ENCODE measurements at regions of chrX and their contacts with region 1.

Region 1: GRCh38 chrX:47497273-47497672 is 14.3 kb upstream of the ZNF41 start:
- DNase-seq: peak; percentile 23
- H3K4me3 ChIP-seq: no peak overlapping the region
- H3K27ac ChIP-seq: no peak overlapping the region
- H3K4me1 ChIP-seq: peaks cover 16% of the 10 kb centered on the region
- CTCF ChIP-seq: peak; percentile 77

Region 2: DNA sequence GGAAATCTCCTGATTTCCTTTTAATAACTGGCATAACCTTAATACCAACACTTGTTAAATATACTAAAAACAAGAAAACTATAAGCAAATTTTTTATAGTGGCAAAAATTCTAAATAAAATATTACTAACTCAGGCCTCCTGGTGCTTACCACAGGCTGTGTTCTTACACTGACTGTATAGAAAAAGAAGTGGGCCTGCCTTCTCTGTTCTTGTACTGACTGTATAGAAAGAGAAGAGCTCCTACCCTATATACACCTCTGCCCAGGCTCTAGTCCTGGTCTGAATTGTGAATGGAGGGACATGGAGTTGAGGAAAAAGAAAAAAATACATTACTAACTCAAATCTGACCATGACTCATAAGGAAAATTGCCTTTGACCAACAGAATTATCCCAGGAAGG is 21.8 kb before region 1 on chrX:
- CTCF ChIA-PET with region 1: no interaction called
- POLR2A ChIA-PET with region 1: no interaction called
- intact Hi-C with region 1: no loop called
- DNase-seq: no peak
- H3K4me3 ChIP-seq: no peak overlapping the region
- H3K27ac ChIP-seq: no peak overlapping the region
- H3K4me1 ChIP-seq: peaks cover 2% of the 10 kb centered on the region
- CTCF ChIP-seq: no peak

Region 3: DNA sequence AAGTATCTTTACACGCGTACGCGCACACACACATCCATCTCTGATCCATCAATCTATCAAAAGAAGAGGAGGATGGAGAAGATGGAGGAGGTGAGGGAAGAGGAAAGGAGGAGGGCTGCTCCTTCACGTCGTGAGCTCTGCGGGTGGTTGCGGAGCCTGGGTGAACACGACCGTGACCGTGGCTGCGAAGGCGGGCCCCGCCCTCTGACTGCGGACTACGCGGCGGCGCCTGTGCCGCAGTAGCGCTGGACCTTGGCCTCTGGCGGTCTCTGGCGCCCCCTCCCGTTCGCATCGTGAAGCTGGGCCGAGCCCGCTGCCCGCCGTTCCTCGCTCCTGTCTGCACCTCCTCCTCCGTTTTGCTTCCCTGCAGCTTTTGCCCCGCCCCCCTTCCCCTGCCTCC is 26.0 kb after region 1 on chrX:
- CTCF ChIA-PET with region 1: no interaction called
- POLR2A ChIA-PET with region 1: interaction called, 7 read pairs
- intact Hi-C with region 1: loop called (anchors 1 kb)
- DNase-seq: peak; percentile 78
- H3K4me3 ChIP-seq: peak overlapping the region; percentile 68
- H3K27ac ChIP-seq: no peak overlapping the region
- H3K4me1 ChIP-seq: peaks cover 9% of the 10 kb centered on the region
- CTCF ChIP-seq: peak; percentile 74

Region 4: GRCh38 chrX:47560831-47561652 is 63.8 kb after region 1 on chrX and contains the start of gene ARAF:
- CTCF ChIA-PET with region 1: no interaction called
- POLR2A ChIA-PET with region 1: interaction called, 3 read pairs
- intact Hi-C with region 1: loop called (anchors 5 kb)
- DNase-seq: peak; percentile 98
- H3K4me3 ChIP-seq: peak within 1 kb of the TSS; percentile 86
- H3K27ac ChIP-seq: peak within 1 kb of the TSS; percentile 70
- H3K4me1 ChIP-seq: peaks cover 31% of the 10 kb centered on the region
- CTCF ChIP-seq: no peak
- total RNA-seq, gene ARAF: 13.2 and 28.9 TPM in 2 replicates

Region 5: DNA sequence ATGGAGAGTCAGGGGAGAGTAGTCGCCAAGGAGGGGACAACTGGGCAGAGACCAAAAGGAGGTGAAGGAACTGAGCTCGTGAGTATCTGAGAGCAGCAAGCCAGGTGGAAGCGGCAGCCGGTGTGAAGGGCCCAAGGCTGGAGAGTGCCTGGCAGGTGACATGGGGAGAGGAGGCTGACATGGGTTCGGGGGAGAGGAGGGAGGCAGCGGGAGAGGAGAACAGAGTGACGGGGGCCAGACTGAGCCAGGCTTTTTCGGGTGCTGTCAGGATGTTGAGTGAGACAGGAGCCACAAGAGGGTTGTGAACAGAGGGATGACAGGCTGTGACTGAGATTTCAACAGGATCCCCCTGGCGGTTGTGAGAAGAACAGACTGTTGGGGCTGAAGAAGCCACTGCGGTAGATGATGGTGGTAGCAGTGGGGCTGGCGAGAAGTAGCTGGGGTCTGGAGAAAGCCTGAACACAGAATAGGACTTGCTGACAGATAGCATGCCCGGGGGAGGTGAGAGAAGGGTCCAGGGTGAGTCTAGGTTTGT is 147.4 kb after region 1 on chrX:
- CTCF ChIA-PET with region 1: no interaction called
- POLR2A ChIA-PET with region 1: no interaction called
- intact Hi-C with region 1: loop called (anchors 10 kb)
- DNase-seq: no peak
- H3K4me3 ChIP-seq: no peak overlapping the region
- H3K27ac ChIP-seq: no peak overlapping the region
- H3K4me1 ChIP-seq: peaks cover 11% of the 10 kb centered on the region
- CTCF ChIP-seq: no peak

Region 6: DNA sequence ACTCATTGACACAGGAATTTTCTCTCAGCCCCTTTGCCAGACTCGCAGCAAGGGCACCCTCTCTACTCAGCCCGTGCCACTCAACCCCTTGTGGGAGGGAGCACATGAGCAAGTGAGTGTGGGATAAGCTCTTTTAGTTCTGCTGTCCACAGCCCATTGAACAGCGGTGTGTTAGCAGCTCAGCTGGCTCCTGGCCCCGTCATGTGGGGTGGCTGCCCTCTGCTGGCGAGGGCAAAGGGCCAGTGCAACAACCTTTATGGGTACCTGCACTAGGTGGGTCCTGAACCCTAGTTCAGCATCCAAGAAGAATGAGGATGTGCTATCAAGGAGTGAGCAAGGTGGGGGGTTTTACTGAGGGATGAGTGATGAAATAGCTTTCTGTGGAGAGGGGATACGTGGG is 254.4 kb after region 1 on chrX:
- CTCF ChIA-PET with region 1: no interaction called
- POLR2A ChIA-PET with region 1: no interaction called
- intact Hi-C with region 1: loop called (anchors 5 kb)
- DNase-seq: peak; percentile 18
- H3K4me3 ChIP-seq: no peak overlapping the region
- H3K27ac ChIP-seq: no peak overlapping the region
- H3K4me1 ChIP-seq: no peaks in the 10 kb centered on the region
- CTCF ChIP-seq: peak; percentile 52

Region 7: DNA sequence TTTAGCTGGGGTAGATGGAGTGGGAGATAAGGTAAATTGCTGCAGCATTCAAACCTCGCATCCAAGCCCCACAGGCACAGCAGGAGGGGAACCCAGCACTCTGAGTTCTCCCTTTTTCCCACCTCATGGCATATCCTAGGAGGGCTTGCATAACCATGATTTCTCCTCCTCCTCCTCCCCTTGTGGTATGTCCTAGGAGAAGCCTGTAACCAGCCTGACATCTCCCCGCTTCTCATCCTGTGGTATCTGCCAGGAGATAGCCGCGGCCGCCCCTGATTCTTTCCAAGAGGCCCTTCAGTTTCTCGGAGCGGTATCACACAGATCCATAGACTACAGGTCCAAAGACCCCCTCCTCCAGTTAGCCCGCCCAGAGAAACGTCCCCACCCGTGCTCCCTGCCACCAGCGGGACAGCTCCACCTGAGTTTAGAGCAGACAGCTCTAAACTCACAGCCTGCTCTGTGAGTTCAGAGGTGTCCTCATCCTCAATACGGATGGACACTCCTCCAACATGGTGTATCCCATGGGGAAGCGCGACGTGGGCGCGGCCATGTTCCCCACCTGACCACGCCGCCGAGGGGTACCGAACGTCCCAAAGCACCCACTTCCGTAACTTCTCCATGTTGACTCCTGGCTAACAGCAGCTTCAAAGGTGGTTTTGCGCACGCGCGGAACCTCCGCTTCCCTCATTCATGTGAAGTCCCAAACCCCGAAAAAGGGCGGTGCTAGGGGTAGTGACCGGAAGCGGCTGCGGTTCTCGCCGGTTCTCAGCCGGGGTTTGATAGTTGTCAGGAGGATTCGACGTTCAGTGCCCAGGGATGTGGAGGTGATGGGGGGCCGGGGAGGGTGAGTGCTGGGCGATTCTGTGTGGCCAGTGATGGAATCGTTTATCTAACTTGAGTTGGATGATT is 339.1 kb after region 1 on chrX and contains the start of gene ZNF81:
- CTCF ChIA-PET with region 1: no interaction called
- POLR2A ChIA-PET with region 1: no interaction called
- intact Hi-C with region 1: loop called (anchors 5 kb)
- DNase-seq: peak; percentile 95
- H3K4me3 ChIP-seq: peak within 1 kb of the TSS; percentile 90
- H3K27ac ChIP-seq: peak within 1 kb of the TSS; percentile 38
- H3K4me1 ChIP-seq: peaks cover 17% of the 10 kb centered on the region
- CTCF ChIP-seq: no peak
- total RNA-seq, gene ZNF81: 4.9 and 7.1 TPM in 2 replicates

Region 8: DNA sequence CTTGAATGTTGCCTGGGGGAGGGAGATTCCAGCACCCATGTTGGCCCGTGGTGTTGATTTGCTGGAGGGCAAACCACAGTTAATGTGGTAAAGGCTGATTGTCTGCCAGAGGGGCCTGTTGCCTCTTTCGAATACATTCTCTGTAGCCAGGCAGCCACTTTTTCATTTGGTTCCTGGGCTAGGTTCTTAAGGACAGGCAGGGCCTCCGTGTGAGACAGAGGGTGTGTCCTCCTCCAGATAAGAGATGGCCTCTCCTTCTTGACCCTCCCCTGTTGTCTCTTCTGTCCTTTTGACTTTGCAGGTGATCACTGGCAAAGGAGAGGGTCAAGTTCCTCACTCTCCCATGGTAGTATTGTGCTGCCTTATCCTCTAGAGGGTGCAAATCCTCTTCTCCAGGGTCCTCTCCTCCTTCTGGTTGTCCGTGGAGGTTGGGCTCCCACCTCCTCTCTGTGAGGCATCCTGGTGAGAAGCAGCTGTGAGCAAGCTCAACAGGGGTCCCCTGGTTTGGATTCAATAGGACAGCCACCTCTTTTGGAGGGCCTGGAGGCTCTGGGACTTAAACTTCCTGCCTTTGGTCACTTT is 461.6 kb after region 1 on chrX:
- CTCF ChIA-PET with region 1: no interaction called
- POLR2A ChIA-PET with region 1: no interaction called
- intact Hi-C with region 1: no loop called
- DNase-seq: peak; percentile 51
- H3K4me3 ChIP-seq: no peak overlapping the region
- H3K27ac ChIP-seq: no peak overlapping the region
- H3K4me1 ChIP-seq: peaks cover 21% of the 10 kb centered on the region
- CTCF ChIP-seq: peak; percentile 62

Measured in OCI-LY7 (cell line).